K562 (cell line): ENCODE measurements at regions of chr2 and their contacts with region 1.

Region 1: DNA sequence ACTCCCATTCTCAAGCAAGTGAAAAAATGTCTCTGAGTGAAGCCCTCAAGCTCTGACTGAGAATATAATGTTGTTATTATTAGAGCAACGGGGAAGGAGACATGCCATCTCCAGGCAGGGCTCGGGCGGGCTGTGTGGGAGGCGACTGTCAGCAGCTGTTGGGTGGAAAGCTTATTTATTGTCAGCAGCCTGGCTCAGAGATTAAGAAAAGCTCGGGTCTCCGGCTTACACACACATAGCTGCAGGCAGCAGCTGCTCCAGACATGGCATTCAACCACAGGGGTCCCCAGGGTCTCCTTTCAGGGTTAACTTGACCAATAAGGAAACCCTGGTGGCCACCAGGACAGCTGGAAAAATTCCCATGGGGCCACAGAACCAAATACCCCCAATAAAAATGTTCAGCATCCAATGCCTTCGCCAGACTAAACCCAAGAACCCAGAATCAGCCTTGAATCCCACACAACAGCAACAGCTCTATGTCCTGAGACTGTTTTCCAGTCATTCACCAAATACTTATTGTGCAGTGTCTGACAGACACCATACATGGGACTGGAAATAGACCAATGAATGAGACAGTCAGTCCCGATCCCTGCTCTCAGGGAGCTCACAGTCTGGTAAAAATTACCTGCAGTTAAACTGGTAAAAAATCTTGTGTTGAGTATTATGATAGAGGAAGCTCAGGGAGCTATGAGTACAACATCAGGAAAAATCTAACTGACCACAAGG is 70.5 kb upstream of the RTN4 start:
- DNase-seq: peak in 3 of 4 experiments; percentile 29 to 84 (median 68)
- ATAC-seq: peak; percentile 66
- H3K4me3 ChIP-seq: no peak overlapping the region
- H3K27ac ChIP-seq: peak overlapping the region; percentile 65
- H3K4me1 ChIP-seq: peaks cover 35 to 64% of the 10 kb centered on the region in 2 experiments
- H3K27me3 ChIP-seq: no peaks in the 10 kb centered on the region
- CTCF ChIP-seq: no peak
- EP300 ChIP-seq: peak; percentile 54; the same call in 1 of the 2 replicates
- POLR2A ChIP-seq: no peak
- RAD21 ChIP-seq: peak in 1 of 2 experiments; percentile 20; a peak in 1 of 4 replicates

Region 2: DNA sequence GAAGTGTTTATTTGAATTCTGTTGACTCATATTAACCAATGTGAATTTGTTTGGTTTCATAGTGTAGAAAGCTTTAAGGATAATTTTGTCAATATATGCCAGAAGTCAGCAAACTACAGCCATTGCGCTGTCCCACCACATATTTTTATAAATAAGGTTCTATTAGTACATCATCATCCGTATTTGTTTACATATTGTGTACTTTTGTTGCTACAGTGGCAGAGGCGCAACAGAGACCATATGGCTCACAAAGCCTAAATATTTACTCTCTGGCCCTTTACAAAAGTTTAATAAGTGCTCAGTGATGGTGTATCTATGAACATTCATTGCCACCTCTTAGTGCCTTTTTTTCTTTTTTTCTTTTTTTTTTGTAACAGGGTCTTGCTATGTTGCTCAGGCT is 1327.5 kb before region 1 on chr2:
- CTCF ChIA-PET with region 1: no interaction called
- POLR2A ChIA-PET with region 1: no interaction called
- in situ Hi-C with region 1: no loop called
- intact Hi-C with region 1: no loop called
- DNase-seq: no peak
- ATAC-seq: no peak
- H3K4me3 ChIP-seq: no peak overlapping the region
- H3K27ac ChIP-seq: no peak overlapping the region
- H3K4me1 ChIP-seq: no peaks in the 10 kb centered on the region; a peak in 1 of 5 replicates
- H3K27me3 ChIP-seq: no peaks in the 10 kb centered on the region
- CTCF ChIP-seq: no peak
- EP300 ChIP-seq: no peak
- POLR2A ChIP-seq: no peak
- RAD21 ChIP-seq: no peak

Region 3: GRCh38 chr2:55099878-55100820 is 20.6 kb before region 1 on chr2:
- CTCF ChIA-PET with region 1: no interaction called
- POLR2A ChIA-PET with region 1: interaction called, 12 read pairs
- in situ Hi-C with region 1: no loop called
- intact Hi-C with region 1: loop called (anchors 2 kb)
- DNase-seq: no peak
- ATAC-seq: peak; percentile 57
- H3K4me3 ChIP-seq: no peak overlapping the region
- H3K27ac ChIP-seq: peak overlapping the region; percentile 58
- H3K4me1 ChIP-seq: peaks cover 4 to 39% of the 10 kb centered on the region in 2 experiments; a peak in 4 of 5 replicates
- H3K27me3 ChIP-seq: no peaks in the 10 kb centered on the region
- CTCF ChIP-seq: no peak
- EP300 ChIP-seq: peak; percentile 59
- POLR2A ChIP-seq: no peak
- RAD21 ChIP-seq: peak in 1 of 2 experiments; percentile 33; a peak in 2 of 4 replicates

Region 4: GRCh38 chr2:55133467-55134315 is 12.9 kb after region 1 on chr2:
- CTCF ChIA-PET with region 1: no interaction called
- POLR2A ChIA-PET with region 1: interaction called, 26 read pairs
- in situ Hi-C with region 1: no loop called
- intact Hi-C with region 1: no loop called
- DNase-seq: peak; percentile 39 to 75 (median 52)
- ATAC-seq: peak; percentile 76
- H3K4me3 ChIP-seq: peak overlapping the region; percentile 5; the same call in 1 of the 2 replicates
- H3K27ac ChIP-seq: peak overlapping the region; percentile 88
- H3K4me1 ChIP-seq: peaks cover 30 to 48% of the 10 kb centered on the region in 2 experiments
- H3K27me3 ChIP-seq: no peaks in the 10 kb centered on the region
- CTCF ChIP-seq: no peak
- EP300 ChIP-seq: peak; percentile 36
- POLR2A ChIP-seq: peak; percentile 44; the same call in 1 of the 2 replicates
- RAD21 ChIP-seq: no peak